K562 (cell line): ENCODE measurements at regions of chr1 and their contacts with region 1.

Region 1: DNA sequence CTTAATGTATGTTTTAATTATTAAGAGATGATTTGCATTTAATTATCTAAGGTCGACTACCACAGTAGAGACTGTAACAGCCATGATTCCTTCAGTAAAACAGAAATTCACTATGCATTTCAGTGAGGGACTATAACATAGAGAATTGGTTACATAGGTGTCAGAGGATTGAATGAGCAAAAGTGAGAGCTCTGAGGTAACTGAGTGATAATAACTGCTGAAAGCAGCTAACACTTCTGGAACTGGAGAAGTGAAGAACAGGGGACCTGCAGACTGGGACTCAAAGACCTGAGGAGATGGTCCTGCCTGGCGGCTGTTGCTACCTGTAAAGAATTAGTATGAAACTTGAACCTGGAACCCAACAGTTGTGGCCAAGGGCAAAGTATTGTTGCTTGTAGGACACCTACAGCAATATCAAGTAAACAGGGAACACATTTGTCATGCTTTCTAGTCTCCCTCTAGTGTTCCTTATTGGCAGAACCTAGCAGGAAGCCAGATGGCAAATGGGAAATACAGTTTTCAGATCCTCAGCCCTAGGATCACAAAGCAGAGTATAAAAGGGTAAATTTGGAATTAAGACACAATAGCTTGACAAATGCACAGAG is 110.6 kb downstream of the HS2ST1 start:
- DNase-seq: peak; percentile 29 to 69 (median 46)
- ATAC-seq: peak; percentile 93
- H3K4me3 ChIP-seq: no peak overlapping the region
- H3K27ac ChIP-seq: peak overlapping the region; percentile 40; the same call in 2 of the 3 replicates
- H3K4me1 ChIP-seq: peaks cover 7 to 8% of the 10 kb centered on the region in 2 experiments; a peak in 3 of 5 replicates
- H3K27me3 ChIP-seq: no peaks in the 10 kb centered on the region
- CTCF ChIP-seq: peak; percentile 64 to 83 (median 70)
- EP300 ChIP-seq: peak; percentile 19; the same call in 1 of the 2 replicates
- POLR2A ChIP-seq: no peak
- RAD21 ChIP-seq: peak; percentile 73 to 85

Region 2: GRCh38 chr1:86779308-86780191 is 245.5 kb before region 1 on chr1:
- CTCF ChIA-PET with region 1: no interaction called
- POLR2A ChIA-PET with region 1: no interaction called
- in situ Hi-C with region 1: no loop called
- intact Hi-C with region 1: loop called (anchors 5 kb)
- DNase-seq: peak in 2 of 4 experiments; percentile 25 to 64
- ATAC-seq: peak; percentile 53
- H3K4me3 ChIP-seq: no peak overlapping the region
- H3K27ac ChIP-seq: no peak overlapping the region
- H3K4me1 ChIP-seq: peaks cover 7 to 36% of the 10 kb centered on the region in 2 experiments; a peak in 4 of 5 replicates
- H3K27me3 ChIP-seq: no peaks in the 10 kb centered on the region
- CTCF ChIP-seq: no peak
- EP300 ChIP-seq: peak; percentile 60
- POLR2A ChIP-seq: no peak
- RAD21 ChIP-seq: no peak